ENCODE measurements at regions of chr14 and their contacts with region 1.

Region 1: DNA sequence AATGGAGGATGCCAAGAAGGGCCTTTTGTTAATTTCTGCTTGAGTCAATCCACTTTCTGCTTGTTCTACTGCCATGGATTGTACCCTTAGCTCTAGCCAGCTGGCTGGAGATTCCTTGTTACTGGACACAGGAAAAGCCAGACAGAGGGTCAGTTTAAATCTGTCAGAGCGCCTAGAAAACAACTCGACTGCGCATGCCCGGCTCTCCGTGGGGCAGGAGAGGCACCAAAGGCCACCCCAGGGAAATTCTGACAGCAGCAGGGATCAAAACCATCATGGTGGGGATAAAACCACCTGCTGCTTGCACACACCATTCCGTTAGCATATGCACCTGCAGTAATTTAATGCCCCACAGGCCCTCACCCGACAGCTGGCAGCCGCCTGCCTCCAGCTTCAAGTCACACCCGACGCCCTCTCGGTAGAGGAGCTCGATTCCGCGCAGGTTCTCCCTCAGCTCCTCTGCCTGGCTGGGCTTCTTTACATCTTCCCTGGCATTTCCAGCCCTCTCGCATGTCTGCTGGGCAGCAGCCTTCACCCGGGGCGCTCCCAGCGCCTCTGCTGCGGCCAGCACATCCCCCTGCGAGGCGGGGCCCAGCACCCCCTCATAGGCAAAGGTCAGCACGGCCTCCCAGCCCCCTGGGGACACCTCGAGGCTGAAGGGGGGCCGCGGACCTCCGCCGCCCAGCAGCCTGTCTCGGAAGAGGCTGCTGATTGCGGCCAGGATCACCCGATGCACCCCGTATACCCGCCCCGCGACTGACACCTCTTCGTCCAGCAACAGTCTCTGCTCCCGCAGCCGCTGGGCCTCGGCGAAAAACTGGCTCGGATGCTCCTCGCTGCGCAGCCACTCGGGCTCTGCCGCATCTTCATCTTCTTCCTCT is 1.0 kb downstream of the KLHL33 start:
- DNase-seq: peak; percentile 77 to 91
- ATAC-seq: peak; percentile 81
- H3K4me3 ChIP-seq: peak overlapping the region; percentile 47 to 67 (median 58)
- H3K27ac ChIP-seq: peak overlapping the region; percentile 88 to 98 (median 92)
- H3K4me1 ChIP-seq: peaks cover 52 to 68% of the 10 kb centered on the region in 2 donors
- H3K27me3 ChIP-seq: no peaks in the 10 kb centered on the region
- CTCF ChIP-seq: no peak
- POLR2A ChIP-seq: peak in 1 of 2 donors; percentile 48

Region 2: DNA sequence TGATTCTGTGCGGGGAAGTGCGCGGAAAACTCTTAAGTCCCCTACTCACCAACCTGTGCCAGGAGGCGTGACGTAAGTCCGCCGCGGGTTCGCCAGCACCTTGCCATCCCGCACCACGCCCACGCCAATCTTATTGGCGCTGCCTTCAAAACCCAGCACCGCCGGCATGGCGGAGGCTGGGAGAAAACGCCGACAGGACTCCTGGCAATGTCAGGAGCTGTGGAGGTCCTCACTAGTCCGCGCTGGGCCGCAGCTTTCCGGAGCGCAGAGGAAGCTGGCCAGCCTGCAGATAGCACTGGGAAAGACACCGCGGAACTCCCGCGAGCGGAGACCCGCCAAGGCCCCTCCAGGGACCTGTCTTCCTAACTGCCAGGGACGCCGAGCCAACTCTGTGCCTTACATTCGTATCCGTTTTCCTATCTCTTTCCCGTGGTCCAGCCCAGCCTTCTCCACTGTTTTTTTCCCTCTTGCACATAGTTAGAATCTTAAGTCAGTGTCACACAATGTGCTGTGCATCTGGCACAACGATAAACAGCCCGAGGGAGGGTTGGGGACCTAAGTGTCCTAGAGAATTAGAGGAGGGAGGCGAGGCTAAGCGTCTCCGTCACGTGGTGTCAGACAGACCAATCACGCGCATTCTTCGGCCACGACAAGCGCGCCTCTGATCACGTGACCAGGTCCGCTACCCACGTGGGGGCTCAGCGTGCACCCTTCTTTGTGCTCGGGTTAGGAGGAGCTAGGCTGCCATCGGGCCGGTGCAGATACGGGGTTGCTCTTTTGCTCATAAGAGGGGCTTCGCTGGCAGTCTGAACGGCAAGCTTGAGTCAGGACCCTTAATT is 19.8 kb after region 1 on chr14 and contains the starts of genes APEX1 and OSGEP:
- in situ Hi-C with region 1: no loop called
- intact Hi-C with region 1: loop called (anchors 1 kb)
- DNase-seq: peak; percentile 99
- ATAC-seq: peak; percentile 95 to 96
- H3K4me3 ChIP-seq: peak within 1 kb of the TSS; percentile 81 to 88 (median 87)
- H3K27ac ChIP-seq: peak within 1 kb of the TSS; percentile 86 to 98 (median 98)
- H3K4me1 ChIP-seq: peaks cover 23 to 29% of the 10 kb centered on the region in 2 donors
- H3K27me3 ChIP-seq: no peaks in the 10 kb centered on the region
- CTCF ChIP-seq: peak in 3 of 5 experiments; percentile 20 to 51 (median 51)
- POLR2A ChIP-seq: peak; percentile 91 to 95
- total RNA-seq, gene APEX1: 65.6 to 132 (median 94.2) TPM
- total RNA-seq, gene OSGEP: 15.8 to 21.7 (median 20.5) TPM

Measured in gastrocnemius medialis (tissue), 4 donors.